Adrenal gland (tissue), 19 donors: ENCODE measurements at regions of chr21 and their contacts with region 1.

Region 1: DNA sequence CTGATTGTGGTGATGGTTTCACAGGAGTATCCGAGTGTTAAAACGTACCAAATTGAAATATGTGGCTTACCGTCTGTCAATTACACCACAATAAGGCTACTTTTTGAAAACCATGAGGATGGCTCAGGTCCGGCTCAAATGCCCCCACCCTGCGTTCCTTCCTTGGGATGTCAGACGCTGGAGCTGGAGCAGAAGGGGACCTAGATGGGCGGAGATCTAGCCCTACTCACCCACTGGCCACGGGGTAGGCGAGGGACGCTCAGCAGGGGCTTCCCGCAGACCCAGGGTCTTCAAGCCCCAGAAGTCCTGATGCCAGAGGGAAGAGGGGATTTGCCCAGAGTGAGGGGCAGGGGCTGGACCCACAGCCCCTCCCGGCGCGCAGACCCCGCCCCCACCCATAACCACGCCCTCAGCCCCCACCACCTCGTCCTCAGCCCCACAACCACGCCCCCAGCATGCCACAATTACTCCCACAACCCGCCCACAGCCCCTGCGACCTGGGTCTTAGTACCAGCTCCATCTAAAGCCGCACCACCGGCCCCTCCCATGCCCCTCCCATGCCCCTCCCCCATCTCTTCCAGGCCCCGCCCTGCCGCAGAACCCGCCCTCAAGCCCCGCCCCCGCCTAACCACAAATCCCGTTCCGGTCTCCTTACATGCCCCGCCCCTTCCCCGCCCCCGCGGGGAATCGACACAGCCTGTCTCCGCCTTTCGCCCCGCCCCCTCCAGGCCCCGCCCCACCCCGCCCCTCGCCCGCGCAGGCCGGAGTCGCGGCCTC is at the start of gene LRRC3:
- DNase-seq: peak; percentile 84 to 93 (median 90)
- H3K4me3 ChIP-seq: peak within 1 kb of the TSS in 3 of 4 donors; percentile 25 to 98 (median 40)
- H3K27ac ChIP-seq: peak within 1 kb of the TSS in 1 of 5 donors; percentile 43
- H3K4me1 ChIP-seq: peaks cover 4 to 5% of the 10 kb centered on the region in 2 donors
- H3K27me3 ChIP-seq: no peaks in the 10 kb centered on the region
- CTCF ChIP-seq: no peak
- POLR2A ChIP-seq: no peak
- total RNA-seq, gene LRRC3: 0.67 to 3.2 (median 2.3) TPM

Region 2: DNA sequence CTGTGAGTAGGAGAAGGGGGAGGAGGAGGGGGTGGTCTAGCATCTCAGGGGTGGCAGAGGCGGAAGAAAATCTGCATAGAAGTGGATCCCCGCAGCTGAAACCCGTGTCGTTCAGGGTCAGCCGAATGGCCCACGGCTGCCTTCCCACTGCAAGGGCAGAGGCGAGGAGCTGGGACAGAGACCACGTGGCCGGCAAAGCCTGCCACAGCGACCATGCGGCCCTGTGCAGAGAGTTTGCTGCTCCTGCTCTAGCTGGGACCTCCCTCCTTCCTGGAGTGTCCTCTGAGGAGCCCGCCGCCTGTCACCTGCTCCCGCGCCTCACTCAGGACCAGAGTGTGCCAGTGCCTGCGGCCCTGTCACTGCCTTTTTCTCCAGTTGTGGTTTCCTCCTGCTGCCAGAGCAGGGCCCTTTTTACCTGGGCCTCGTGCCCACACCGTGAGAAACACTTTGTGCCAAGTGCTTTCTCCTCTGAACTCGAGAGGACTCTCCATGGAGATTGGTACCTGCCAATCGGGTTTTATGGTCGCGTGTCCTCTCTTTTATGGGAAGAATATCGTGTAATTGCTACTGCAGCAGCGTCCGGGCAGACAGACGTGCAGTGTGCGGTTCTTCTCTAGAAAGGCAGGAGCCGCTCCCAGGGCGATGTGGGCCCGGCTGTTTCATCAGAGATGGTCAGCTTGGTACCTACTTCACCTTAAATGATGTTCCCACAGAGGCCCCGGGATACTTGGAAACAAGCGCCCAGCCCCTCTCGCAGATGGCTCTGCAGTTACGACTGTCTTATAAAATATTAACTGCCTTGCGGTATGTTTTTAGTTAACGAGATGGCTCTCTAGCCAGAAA is 106.8 kb before region 1 on chr21:
- intact Hi-C with region 1: loop called in 1 of 2 experiments (anchors 10 kb)
- DNase-seq: no peak
- H3K4me3 ChIP-seq: no peak overlapping the region
- H3K27ac ChIP-seq: no peak overlapping the region
- H3K4me1 ChIP-seq: no peaks in the 10 kb centered on the region
- H3K27me3 ChIP-seq: peaks cover 32% of the 10 kb centered on the region
- CTCF ChIP-seq: no peak
- POLR2A ChIP-seq: no peak